ENCODE measurements at regions of chr3 and their contacts with region 1.

Region 1: GRCh38 chr3:120795017-120795648 is 52.6 kb downstream of the GTF2E1 start:
- DNase-seq: peak; percentile 91
- ATAC-seq: peak; percentile 93
- H3K4me3 Mint-ChIP-seq: no peak overlapping the region
- H3K27ac Mint-ChIP-seq: no peak overlapping the region
- H3K4me1 Mint-ChIP-seq: peaks cover 57% of the 10 kb centered on the region
- H3K27me3 Mint-ChIP-seq: no peaks in the 10 kb centered on the region
- CTCF ChIP-seq: peak; percentile 83

Region 2: DNA sequence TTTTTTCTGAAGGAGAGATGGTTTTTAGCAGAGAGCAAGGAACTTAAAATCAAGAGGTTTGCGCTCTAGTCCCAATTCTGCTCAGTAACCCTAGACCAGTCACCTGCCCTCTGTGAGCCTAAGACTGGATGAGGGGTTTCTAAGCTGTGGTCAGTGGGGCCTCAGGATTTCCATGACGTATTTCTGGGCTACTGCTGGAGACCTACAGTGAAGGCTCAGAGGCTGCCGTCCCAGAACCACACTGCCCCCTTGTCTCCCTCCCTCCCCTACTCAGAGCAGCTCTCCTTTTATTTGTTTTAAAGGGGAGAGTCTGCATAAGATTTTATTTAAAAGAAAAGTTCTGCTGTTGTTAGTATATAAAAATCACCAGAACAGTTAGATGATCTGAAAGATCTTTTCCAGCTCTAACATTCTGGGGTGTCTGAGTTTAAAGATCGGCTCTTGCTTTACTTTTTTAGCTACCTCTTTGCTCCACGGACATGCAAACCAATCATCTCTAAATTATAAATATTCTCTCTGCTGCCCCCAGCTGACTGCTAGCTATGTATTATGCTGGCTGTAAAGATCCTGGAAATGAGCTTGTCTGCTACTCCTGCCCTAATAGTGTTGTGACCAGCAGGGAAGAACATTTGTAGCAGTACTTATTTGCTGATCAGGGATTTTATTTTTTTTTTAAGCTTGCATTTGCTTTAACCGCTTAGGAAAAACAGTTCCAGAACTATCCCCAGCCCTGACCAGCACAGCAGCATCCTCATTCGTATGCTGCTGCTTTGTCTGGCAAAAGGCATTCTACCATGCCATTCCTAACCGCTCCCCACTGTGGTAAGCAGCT is 227.5 kb before region 1 on chr3:
- CTCF ChIA-PET with region 1: interaction called, 50 read pairs
- POLR2A ChIA-PET with region 1: no interaction called
- DNase-seq: peak; percentile 24
- ATAC-seq: peak; percentile 85
- H3K4me3 Mint-ChIP-seq: peak overlapping the region; percentile 47
- H3K27ac Mint-ChIP-seq: peak overlapping the region; percentile 92
- H3K4me1 Mint-ChIP-seq: peaks cover 40% of the 10 kb centered on the region
- H3K27me3 Mint-ChIP-seq: peaks cover 3% of the 10 kb centered on the region; the same call in 1 of the 2 replicates
- CTCF ChIP-seq: no peak

Region 3: GRCh38 chr3:120604784-120605183 is 190.3 kb before region 1 on chr3:
- CTCF ChIA-PET with region 1: interaction called, 14 read pairs
- POLR2A ChIA-PET with region 1: no interaction called
- DNase-seq: no peak
- ATAC-seq: peak; percentile 93
- H3K4me3 Mint-ChIP-seq: no peak overlapping the region
- H3K27ac Mint-ChIP-seq: no peak overlapping the region
- H3K4me1 Mint-ChIP-seq: peaks cover 4% of the 10 kb centered on the region
- H3K27me3 Mint-ChIP-seq: no peaks in the 10 kb centered on the region
- CTCF ChIP-seq: no peak

Region 4: GRCh38 chr3:120622870-120623731 is 172.0 kb before region 1 on chr3:
- CTCF ChIA-PET with region 1: interaction called, 15 read pairs
- POLR2A ChIA-PET with region 1: no interaction called
- DNase-seq: peak; percentile 69
- ATAC-seq: 0 out of 2 replicates have a peak, but pooled peaks have one; percentile 28
- H3K4me3 Mint-ChIP-seq: no peak overlapping the region
- H3K27ac Mint-ChIP-seq: no peak overlapping the region
- H3K4me1 Mint-ChIP-seq: peaks cover 7% of the 10 kb centered on the region
- H3K27me3 Mint-ChIP-seq: peaks cover 11% of the 10 kb centered on the region
- CTCF ChIP-seq: peak; percentile 30; the same call in 1 of the 2 replicates

Region 5: GRCh38 chr3:120678331-120678947 is 116.7 kb before region 1 on chr3:
- CTCF ChIA-PET with region 1: interaction called, 10 read pairs
- POLR2A ChIA-PET with region 1: no interaction called
- DNase-seq: no peak
- ATAC-seq: peak; percentile 78
- H3K4me3 Mint-ChIP-seq: peak overlapping the region; percentile 49
- H3K27ac Mint-ChIP-seq: peak overlapping the region; percentile 100
- H3K4me1 Mint-ChIP-seq: peaks cover 89% of the 10 kb centered on the region
- H3K27me3 Mint-ChIP-seq: no peaks in the 10 kb centered on the region
- CTCF ChIP-seq: no peak

Region 6: GRCh38 chr3:120816728-120817127 is 21.6 kb after region 1 on chr3:
- CTCF ChIA-PET with region 1: interaction called, 14 read pairs
- POLR2A ChIA-PET with region 1: no interaction called
- DNase-seq: no peak
- ATAC-seq: no peak
- H3K4me3 Mint-ChIP-seq: no peak overlapping the region
- H3K27ac Mint-ChIP-seq: no peak overlapping the region
- H3K4me1 Mint-ChIP-seq: no peaks in the 10 kb centered on the region
- H3K27me3 Mint-ChIP-seq: no peaks in the 10 kb centered on the region; the same call in 1 of the 2 replicates
- CTCF ChIP-seq: no peak